ENCODE measurements at regions of chr7 and their contacts with region 1.

Region 1: DNA sequence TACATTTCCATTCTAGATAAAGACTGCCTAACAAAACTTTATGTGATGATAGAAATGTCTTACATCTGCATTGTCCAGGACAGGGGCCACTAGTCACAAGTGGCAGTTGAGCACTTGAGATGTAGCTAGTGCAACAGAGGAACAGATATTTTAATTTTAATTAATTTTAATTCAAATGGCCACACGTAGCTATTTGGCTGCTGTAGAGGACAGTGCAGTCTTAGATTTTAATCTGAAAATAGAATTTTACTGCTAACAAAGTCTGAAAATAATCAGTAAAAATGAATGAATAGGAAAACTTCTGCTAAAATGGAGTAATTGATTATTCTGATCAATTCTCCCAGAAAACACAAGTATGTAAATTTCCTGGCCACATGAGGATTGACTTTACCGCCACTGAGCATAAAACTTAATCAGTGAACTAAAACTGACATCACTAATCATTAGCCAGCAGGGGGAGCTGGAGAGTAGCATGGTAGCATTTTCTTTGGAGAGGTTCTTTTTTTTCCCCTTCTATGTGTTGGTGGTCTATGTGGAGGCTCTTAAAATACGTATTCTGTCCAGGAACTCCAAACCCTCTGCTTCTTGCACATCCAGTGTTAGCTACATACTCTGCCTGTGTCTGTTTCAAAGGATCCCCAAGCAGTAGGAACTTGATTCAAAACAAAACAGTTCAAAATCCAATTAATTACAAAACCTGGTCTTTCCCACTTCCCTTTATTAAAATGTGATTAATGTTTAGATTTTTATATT is 52.1 kb downstream of the TSPAN12 start:
- DNase-seq: peak; percentile 82
- H3K4me3 ChIP-seq: no peak overlapping the region
- H3K27ac ChIP-seq: no peak overlapping the region
- H3K4me1 ChIP-seq: peaks cover 6% of the 10 kb centered on the region
- H3K27me3 ChIP-seq: no peaks in the 10 kb centered on the region
- CTCF ChIP-seq: peak; percentile 87

Region 2: GRCh38 chr7:120857588-120858573 is 52.1 kb after region 1 on chr7 and contains the start of gene TSPAN12:
- CTCF ChIA-PET with region 1: no interaction called
- POLR2A ChIA-PET with region 1: no interaction called
- intact Hi-C with region 1: loop called (anchors 5 kb)
- DNase-seq: peak; percentile 77
- H3K4me3 ChIP-seq: peak within 1 kb of the TSS; percentile 68
- H3K27ac ChIP-seq: no peak within 1 kb of the TSS
- H3K4me1 ChIP-seq: no peaks in the 10 kb centered on the region
- H3K27me3 ChIP-seq: peaks cover 9% of the 10 kb centered on the region
- CTCF ChIP-seq: peak; percentile 63
- total RNA-seq, gene TSPAN12: 0.92 and 1.5 TPM in 2 replicates

Region 3: DNA sequence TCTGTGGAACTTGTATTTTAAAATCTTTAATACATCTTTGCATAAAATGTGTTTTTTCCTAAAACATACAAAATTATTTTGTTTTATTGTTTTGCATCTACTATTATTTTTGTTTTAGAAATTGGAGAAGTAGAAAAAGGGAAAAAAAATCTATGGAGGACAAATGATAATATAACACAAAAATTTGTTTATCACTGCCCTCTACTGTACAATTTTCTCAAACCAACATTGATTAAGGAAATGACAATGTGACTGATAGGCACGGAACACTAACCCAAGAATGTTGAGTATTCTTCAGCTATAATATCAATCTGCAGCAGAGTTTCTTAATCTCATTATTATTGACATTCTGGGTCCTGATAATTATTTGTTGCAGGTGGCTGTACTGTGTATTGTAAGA is 135.3 kb after region 1 on chr7:
- CTCF ChIA-PET with region 1: no interaction called
- POLR2A ChIA-PET with region 1: no interaction called
- intact Hi-C with region 1: loop called (anchors 2 kb)
- DNase-seq: peak; percentile 29
- H3K4me3 ChIP-seq: no peak overlapping the region
- H3K27ac ChIP-seq: no peak overlapping the region
- H3K4me1 ChIP-seq: no peaks in the 10 kb centered on the region
- H3K27me3 ChIP-seq: no peaks in the 10 kb centered on the region
- CTCF ChIP-seq: peak; percentile 58

Region 4: DNA sequence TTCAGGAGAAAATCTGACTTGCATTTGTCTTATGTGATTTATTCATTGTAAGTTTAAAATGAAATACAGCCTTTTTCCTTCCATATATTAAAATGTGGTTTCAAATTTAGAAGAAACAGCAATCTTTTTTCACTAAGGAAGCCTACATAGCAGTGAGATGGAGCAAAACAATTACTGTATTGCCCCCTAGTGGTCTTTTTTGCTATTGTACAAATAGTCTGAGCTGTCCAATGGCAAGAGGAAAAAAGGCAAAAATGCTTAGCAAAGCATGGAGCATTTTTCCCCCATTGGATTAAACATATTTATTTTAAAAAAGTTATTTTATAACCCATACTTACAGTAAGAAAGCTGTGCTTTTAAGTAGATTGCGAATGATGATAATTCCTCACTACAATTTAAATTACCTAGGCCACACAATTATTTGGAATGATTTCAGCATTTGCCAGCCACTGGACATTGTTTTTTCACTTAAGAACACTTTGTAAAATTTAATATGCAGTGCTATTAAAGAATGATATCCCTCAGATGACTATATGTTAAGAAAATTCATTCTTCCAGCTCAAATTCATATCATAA is 302.2 kb after region 1 on chr7:
- CTCF ChIA-PET with region 1: no interaction called
- POLR2A ChIA-PET with region 1: no interaction called
- intact Hi-C with region 1: loop called (anchors 5 kb)
- DNase-seq: peak; percentile 70
- H3K4me3 ChIP-seq: no peak overlapping the region
- H3K27ac ChIP-seq: no peak overlapping the region
- H3K4me1 ChIP-seq: no peaks in the 10 kb centered on the region
- H3K27me3 ChIP-seq: no peaks in the 10 kb centered on the region
- CTCF ChIP-seq: peak; percentile 78

Measured in A673 (cell line).